Mammary epithelial cell (primary cell): ENCODE measurements at regions of chr4 and their contacts with region 1.

Region 1: GRCh38 chr4:99998062-99998867 is 48.2 kb upstream of the H2AZ1 start:
- DNase-seq: peak; percentile 67
- H3K4me3 ChIP-seq: no peak overlapping the region
- H3K27ac ChIP-seq: peak overlapping the region; percentile 2
- H3K4me1 ChIP-seq: peaks cover 5% of the 10 kb centered on the region
- H3K27me3 ChIP-seq: no peaks in the 10 kb centered on the region
- CTCF ChIP-seq: peak; percentile 27 to 41

Region 2: GRCh38 chr4:100093091-100093866 is 95.0 kb after region 1 on chr4:
- CTCF ChIA-PET with region 1: interaction called, 16 read pairs
- dilution Hi-C with region 1: no loop called
- in situ Hi-C with region 1: no loop called
- intact Hi-C with region 1: no loop called
- DNase-seq: peak; percentile 88
- H3K4me3 ChIP-seq: no peak overlapping the region
- H3K27ac ChIP-seq: peak overlapping the region; percentile 64
- H3K4me1 ChIP-seq: peaks cover 4% of the 10 kb centered on the region
- H3K27me3 ChIP-seq: no peaks in the 10 kb centered on the region
- CTCF ChIP-seq: peak; percentile 72 to 85

Region 3: DNA sequence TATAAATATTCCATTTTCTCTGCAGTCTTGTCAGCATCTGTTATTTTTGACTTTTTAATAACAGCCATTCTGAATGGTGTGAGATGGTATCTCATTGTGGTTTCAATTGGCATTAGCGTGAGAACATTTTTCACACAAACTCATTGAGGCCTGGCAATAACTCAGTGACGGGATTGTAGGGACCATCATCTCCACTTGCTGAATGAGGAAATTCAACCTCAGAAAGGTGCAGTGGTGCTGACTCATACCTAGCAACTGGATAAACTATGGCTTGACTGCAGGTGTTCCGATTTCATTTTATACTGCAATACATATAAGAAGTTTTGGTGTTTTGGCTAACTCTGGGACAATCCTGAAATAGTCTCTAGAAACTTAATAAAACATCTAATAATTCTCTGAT is 280.3 kb after region 1 on chr4:
- CTCF ChIA-PET with region 1: no interaction called
- dilution Hi-C with region 1: no loop called
- in situ Hi-C with region 1: no loop called
- intact Hi-C with region 1: no loop called
- DNase-seq: peak; percentile 87
- H3K4me3 ChIP-seq: no peak overlapping the region
- H3K27ac ChIP-seq: no peak overlapping the region
- H3K4me1 ChIP-seq: no peaks in the 10 kb centered on the region
- H3K27me3 ChIP-seq: no peaks in the 10 kb centered on the region
- CTCF ChIP-seq: no peak